T-cell (primary cell): ENCODE measurements at regions of chr5 and their contacts with region 1.

Region 1: GRCh38 chr5:82225525-82226172 is 52.5 kb downstream of the RPS23 start:
- DNase-seq: peak; percentile 11 to 77 (median 43)
- ATAC-seq: peak; percentile 58 to 78 (median 72)
- H3K4me3 ChIP-seq: no peak overlapping the region
- H3K4me3 Mint-ChIP-seq: no peak overlapping the region
- H3K27ac ChIP-seq: no peak overlapping the region
- H3K27ac Mint-ChIP-seq: no peak overlapping the region
- H3K4me1 ChIP-seq: peaks cover 0 to 3% of the 10 kb centered on the region in 2 experiments
- H3K4me1 Mint-ChIP-seq: peaks cover 3 to 11% (median 9%) of the 10 kb centered on the region in 3 donors
- H3K27me3 ChIP-seq: no peaks in the 10 kb centered on the region
- H3K27me3 Mint-ChIP-seq: no peaks in the 10 kb centered on the region

Region 2: GRCh38 chr5:81425569-81425968 is 800.1 kb before region 1 on chr5:
- CTCF ChIA-PET with region 1: interaction called, 6 to 13 read pairs
- POLR2A ChIA-PET with region 1: no interaction called
- DNase-seq: peak in 2 of 35 experiments; percentile 13 to 55
- ATAC-seq: peak in 3 of 4 experiments; percentile 30 to 64 (median 46)
- H3K4me3 ChIP-seq: no peak overlapping the region
- H3K4me3 Mint-ChIP-seq: no peak overlapping the region
- H3K27ac ChIP-seq: no peak overlapping the region
- H3K27ac Mint-ChIP-seq: peak overlapping the region in 1 of 2 donors; percentile 71
- H3K4me1 ChIP-seq: no peaks in the 10 kb centered on the region
- H3K4me1 Mint-ChIP-seq: peaks cover 11 to 12% (median 11%) of the 10 kb centered on the region in 3 donors
- H3K27me3 ChIP-seq: no peaks in the 10 kb centered on the region
- H3K27me3 Mint-ChIP-seq: no peaks in the 10 kb centered on the region